ENCODE measurements at regions of chr1 and their contacts with region 1.

Region 1: DNA sequence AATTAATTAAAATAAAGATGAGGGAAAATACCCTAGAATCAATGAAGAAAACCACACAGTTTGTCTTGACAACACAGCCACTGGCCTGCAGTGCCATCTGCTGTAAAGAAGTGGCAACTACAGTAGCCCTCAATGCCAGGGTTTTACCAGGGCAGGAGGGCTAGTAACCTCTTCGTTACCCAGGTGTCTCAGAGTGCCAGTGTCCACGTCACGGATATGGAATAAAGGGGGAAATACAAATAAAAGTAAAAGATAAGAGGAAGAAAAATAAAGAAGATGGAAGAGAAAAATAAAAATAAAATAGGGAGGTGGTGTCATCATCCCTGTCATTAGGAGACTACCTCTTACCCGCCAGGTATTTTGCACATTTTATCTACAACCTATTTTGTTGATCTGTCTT is 14.2 kb upstream of the SLC44A3 start:
- DNase-seq: peak; percentile 58
- H3K4me3 ChIP-seq: peak overlapping the region in 1 of 3 experiments; percentile 38
- H3K27ac ChIP-seq: no peak overlapping the region
- H3K4me1 ChIP-seq: peaks cover 30% of the 10 kb centered on the region
- H3K27me3 ChIP-seq: peaks cover under 1 to 6% of the 10 kb centered on the region in 2 experiments
- CTCF ChIP-seq: peak; percentile 82 to 87
- POLR2A ChIP-seq: no peak

Region 2: DNA sequence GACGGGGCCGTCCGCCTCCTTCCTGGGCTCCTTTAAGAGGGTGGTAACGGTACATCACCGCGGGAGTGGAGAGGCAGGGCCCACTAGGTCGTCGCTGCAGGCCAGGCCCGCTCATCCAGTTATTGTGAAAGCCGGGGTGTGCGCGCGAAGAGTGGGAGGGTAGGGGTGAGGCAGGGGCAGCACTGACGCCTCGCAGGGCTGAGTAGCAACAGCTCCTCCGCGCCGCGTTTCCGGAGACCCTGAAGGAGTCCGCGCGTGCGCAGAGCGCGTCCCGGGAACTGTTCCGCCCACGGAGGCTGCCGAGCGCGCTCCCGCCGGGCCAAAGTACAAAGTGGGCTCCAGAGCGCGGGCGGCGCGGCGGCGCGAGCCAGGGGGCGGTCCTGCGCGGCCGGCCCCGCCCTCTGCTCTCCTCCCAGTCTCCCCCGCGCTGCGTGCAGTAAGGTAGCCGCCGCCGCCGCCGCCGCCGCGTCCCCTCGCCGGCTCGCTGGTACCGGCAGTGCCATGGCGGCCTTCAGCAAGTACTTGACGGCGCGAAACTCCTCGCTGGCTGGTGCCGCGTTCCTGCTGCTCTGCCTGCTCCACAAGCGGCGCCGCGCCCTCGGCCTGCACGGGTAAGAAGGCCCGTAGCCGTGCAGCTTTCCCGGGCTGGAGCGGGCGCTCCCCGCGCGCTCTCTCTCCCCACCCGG is 387.8 kb before region 1 on chr1 and contains the start of gene ABCD3:
- CTCF ChIA-PET with region 1: interaction called, 3 read pairs
- POLR2A ChIA-PET with region 1: no interaction called
- dilution Hi-C with region 1: no loop called
- intact Hi-C with region 1: loop called (anchors 5 kb)
- DNase-seq: peak; percentile 98
- H3K4me3 ChIP-seq: peak within 1 kb of the TSS; percentile 80 to 94 (median 87)
- H3K27ac ChIP-seq: peak within 1 kb of the TSS; percentile 83
- H3K4me1 ChIP-seq: peaks cover 27% of the 10 kb centered on the region
- H3K27me3 ChIP-seq: peaks cover 4 to 5% of the 10 kb centered on the region in 2 experiments
- CTCF ChIP-seq: no peak
- POLR2A ChIP-seq: peak; percentile 66
- total RNA-seq, gene ABCD3: 31.6 and 32.6 TPM in 2 replicates

Region 3: GRCh38 chr1:94514095-94514727 is 291.7 kb before region 1 on chr1:
- CTCF ChIA-PET with region 1: interaction called, 109 read pairs
- POLR2A ChIA-PET with region 1: no interaction called
- dilution Hi-C with region 1: no loop called
- intact Hi-C with region 1: loop called (anchors 1 kb)
- DNase-seq: peak; percentile 46
- H3K4me3 ChIP-seq: no peak overlapping the region
- H3K27ac ChIP-seq: no peak overlapping the region
- H3K4me1 ChIP-seq: no peaks in the 10 kb centered on the region
- H3K27me3 ChIP-seq: no peaks in the 10 kb centered on the region
- CTCF ChIP-seq: peak; percentile 55 to 67
- POLR2A ChIP-seq: no peak

Region 4: DNA sequence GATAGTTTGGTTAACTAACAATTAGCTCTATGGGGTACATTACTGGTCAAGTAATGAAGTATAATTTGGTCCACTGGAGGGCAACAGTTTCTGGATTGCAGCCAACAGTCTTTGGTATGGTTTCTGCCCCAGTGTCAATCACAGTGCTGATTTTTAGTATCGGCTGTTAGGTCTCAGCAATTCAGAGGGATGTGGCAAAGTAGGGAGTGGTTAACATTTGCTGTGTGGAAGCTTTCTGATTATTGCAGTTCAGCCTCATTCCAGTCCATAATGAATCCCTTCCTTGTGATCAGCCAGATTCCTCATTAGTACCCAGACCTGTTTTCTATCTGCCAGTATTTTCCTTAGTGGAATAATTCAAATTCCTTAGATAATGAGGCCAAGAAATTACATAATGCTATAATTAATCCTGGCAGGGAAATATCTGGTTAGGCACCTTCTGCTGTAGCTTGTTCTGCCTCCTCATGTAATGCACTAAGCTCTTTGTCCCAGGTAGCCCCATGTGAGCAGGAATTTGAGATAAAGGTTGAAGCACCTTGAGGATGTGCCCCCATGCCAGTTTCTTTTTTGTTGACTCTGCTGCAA is 278.4 kb before region 1 on chr1:
- CTCF ChIA-PET with region 1: interaction called, 104 read pairs
- POLR2A ChIA-PET with region 1: no interaction called
- dilution Hi-C with region 1: loop called (anchors 25 kb)
- intact Hi-C with region 1: loop called (anchors 1 kb)
- DNase-seq: peak; percentile 20
- H3K4me3 ChIP-seq: no peak overlapping the region
- H3K27ac ChIP-seq: no peak overlapping the region
- H3K4me1 ChIP-seq: no peaks in the 10 kb centered on the region
- H3K27me3 ChIP-seq: no peaks in the 10 kb centered on the region
- CTCF ChIP-seq: peak in 1 of 2 donors; percentile 3
- POLR2A ChIP-seq: no peak

Region 5: GRCh38 chr1:94755675-94756074 is 50.2 kb before region 1 on chr1:
- CTCF ChIA-PET with region 1: no interaction called
- POLR2A ChIA-PET with region 1: no interaction called
- dilution Hi-C with region 1: no loop called
- intact Hi-C with region 1: no loop called
- DNase-seq: peak; percentile 38
- H3K4me3 ChIP-seq: no peak overlapping the region
- H3K27ac ChIP-seq: no peak overlapping the region
- H3K4me1 ChIP-seq: peaks cover 4% of the 10 kb centered on the region
- H3K27me3 ChIP-seq: no peaks in the 10 kb centered on the region
- CTCF ChIP-seq: no peak
- POLR2A ChIP-seq: no peak

Region 6: DNA sequence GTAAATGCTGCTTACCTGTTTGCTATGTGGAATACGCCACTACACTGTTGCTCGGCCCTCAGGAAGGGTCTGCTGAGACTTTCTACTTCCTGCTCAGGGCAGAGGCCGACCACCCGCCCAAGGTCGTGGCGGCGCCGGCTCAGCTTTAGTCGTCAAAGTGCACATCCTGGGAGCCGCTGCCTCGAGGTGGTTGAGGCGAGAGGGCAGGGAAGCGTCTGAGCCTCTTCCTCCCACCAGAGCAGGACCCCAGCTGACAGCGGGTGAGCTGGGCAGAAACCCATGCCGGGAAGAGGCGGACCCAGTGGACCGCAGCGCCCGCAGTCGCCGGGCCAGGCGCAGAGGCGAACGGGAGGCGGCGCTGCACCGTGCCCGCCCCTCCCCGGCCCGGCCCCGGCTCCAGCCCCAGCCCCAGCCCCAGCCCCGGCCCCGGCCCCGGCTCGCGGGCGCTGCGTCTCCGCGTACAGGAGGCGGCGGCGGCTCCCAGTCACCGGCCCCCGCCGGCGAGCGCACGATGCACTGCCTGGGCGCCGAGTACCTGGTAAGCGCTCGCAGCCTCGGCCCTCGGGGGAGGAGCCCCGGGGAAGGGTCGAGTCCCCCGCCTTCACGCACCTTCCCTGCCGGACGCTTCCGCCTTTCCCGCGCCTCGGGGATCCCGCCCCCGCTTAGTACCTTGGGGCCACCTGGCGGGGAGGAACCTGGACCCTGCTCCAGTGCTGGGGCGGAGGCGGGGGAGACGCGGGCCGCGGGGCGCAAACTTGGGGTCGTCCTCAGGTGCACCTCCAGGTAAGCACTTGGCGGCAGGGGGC is 14.2 kb after region 1 on chr1 and contains the start of gene SLC44A3:
- CTCF ChIA-PET with region 1: interaction called, 11 read pairs
- POLR2A ChIA-PET with region 1: no interaction called
- dilution Hi-C with region 1: no loop called
- intact Hi-C with region 1: no loop called
- DNase-seq: peak; percentile 33
- H3K4me3 ChIP-seq: peak within 1 kb of the TSS in 2 of 3 experiments; percentile 51 to 56
- H3K27ac ChIP-seq: no peak within 1 kb of the TSS
- H3K4me1 ChIP-seq: peaks cover 2% of the 10 kb centered on the region
- H3K27me3 ChIP-seq: peaks cover 42 to 49% of the 10 kb centered on the region in 2 experiments
- CTCF ChIP-seq: peak in 1 of 2 donors; percentile 45
- POLR2A ChIP-seq: no peak
- total RNA-seq, gene SLC44A3: 0.42 and 0.58 TPM in 2 replicates